ENCODE measurements at regions of chr16 and their contacts with region 1.

Region 1: DNA sequence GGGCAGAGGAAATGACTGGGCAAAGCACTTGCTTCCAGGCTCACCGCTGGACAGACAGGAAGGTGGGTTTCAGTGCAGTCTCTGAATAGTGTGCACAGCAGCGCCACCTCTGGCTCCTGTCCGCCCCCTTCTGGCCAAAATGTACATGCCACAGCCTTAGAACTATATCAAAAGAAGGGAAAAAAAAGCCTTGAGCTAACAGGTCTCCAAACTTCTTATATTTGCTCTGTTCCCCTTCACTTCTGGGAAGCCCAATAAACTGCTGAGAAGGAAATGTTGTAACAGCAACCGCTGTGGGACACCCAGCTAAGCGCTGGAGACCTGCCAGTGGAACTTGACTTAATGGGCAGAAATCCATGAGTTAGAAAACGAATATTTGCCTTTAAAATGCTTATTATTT is 17.5 kb downstream of the COG7 start:
- DNase-seq: peak; percentile 15
- ATAC-seq: peak; percentile 100
- H3K4me3 ChIP-seq: no peak overlapping the region
- H3K27ac ChIP-seq: no peak overlapping the region
- H3K4me1 ChIP-seq: no peaks in the 10 kb centered on the region
- H3K27me3 ChIP-seq: no peaks in the 10 kb centered on the region
- CTCF ChIP-seq: peak; percentile 89 to 93 (median 91)
- EP300 ChIP-seq: no peak
- POLR2A ChIP-seq: no peak
- RAD21 ChIP-seq: peak; percentile 72

Region 2: DNA sequence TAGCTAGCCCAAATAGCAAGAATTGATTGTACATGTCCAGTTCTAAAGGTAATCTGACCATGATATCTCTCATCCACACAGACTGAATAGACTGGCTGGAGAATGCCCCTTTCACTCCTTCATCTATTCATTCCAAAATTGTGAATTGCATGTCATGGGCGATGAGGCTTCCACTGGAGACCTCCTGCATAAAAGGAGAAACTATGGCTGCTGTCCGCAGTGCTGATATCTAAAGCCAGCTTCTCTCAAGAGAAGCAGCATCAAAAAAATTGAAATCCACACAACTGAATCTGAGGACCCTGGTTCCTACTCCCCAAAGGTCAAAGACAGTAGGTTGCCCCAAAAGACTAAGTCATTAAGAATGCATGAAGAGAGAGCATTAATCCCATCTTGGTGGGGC is 260.9 kb before region 1 on chr16:
- CTCF ChIA-PET with region 1: interaction called, 470 read pairs
- POLR2A ChIA-PET with region 1: no interaction called
- RAD21 ChIA-PET with region 1: interaction called, 159 read pairs
- SMC1A ChIA-PET with region 1: interaction called, 189 read pairs
- in situ Hi-C with region 1: loop called (anchors 5 kb)
- intact Hi-C with region 1: no loop called
- DNase-seq: no peak
- ATAC-seq: no peak
- H3K4me3 ChIP-seq: no peak overlapping the region
- H3K27ac ChIP-seq: no peak overlapping the region
- H3K4me1 ChIP-seq: no peaks in the 10 kb centered on the region
- H3K27me3 ChIP-seq: no peaks in the 10 kb centered on the region; a peak in 1 of 4 replicates
- CTCF ChIP-seq: no peak
- EP300 ChIP-seq: no peak
- POLR2A ChIP-seq: no peak
- RAD21 ChIP-seq: no peak

Region 3: GRCh38 chr16:23202166-23202565 is 233.3 kb before region 1 on chr16:
- CTCF ChIA-PET with region 1: interaction called, 10 read pairs
- POLR2A ChIA-PET with region 1: no interaction called
- RAD21 ChIA-PET with region 1: interaction called, 11 read pairs
- SMC1A ChIA-PET with region 1: interaction called, 3 read pairs
- in situ Hi-C with region 1: no loop called
- intact Hi-C with region 1: no loop called
- DNase-seq: no peak
- ATAC-seq: no peak
- H3K4me3 ChIP-seq: no peak overlapping the region
- H3K27ac ChIP-seq: no peak overlapping the region
- H3K4me1 ChIP-seq: no peaks in the 10 kb centered on the region
- H3K27me3 ChIP-seq: no peaks in the 10 kb centered on the region
- CTCF ChIP-seq: no peak
- EP300 ChIP-seq: no peak
- POLR2A ChIP-seq: no peak
- RAD21 ChIP-seq: no peak

Region 4: GRCh38 chr16:23324730-23325129 is 110.8 kb before region 1 on chr16:
- CTCF ChIA-PET with region 1: interaction called, 15 read pairs
- POLR2A ChIA-PET with region 1: interaction called, 3 read pairs
- RAD21 ChIA-PET with region 1: no interaction called
- SMC1A ChIA-PET with region 1: interaction called, 33 read pairs
- in situ Hi-C with region 1: no loop called
- intact Hi-C with region 1: no loop called
- DNase-seq: no peak
- ATAC-seq: no peak; the same call in 2 of the 3 replicates
- H3K4me3 ChIP-seq: no peak overlapping the region
- H3K27ac ChIP-seq: no peak overlapping the region
- H3K4me1 ChIP-seq: peaks cover 22% of the 10 kb centered on the region
- H3K27me3 ChIP-seq: no peaks in the 10 kb centered on the region
- CTCF ChIP-seq: no peak
- EP300 ChIP-seq: no peak
- POLR2A ChIP-seq: no peak
- RAD21 ChIP-seq: no peak

Region 5: GRCh38 chr16:23423496-23424049 is 11.9 kb before region 1 on chr16:
- CTCF ChIA-PET with region 1: interaction called, 16 read pairs
- POLR2A ChIA-PET with region 1: no interaction called
- RAD21 ChIA-PET with region 1: interaction called, 6 read pairs
- SMC1A ChIA-PET with region 1: interaction called, 31 read pairs
- in situ Hi-C with region 1: no loop called
- intact Hi-C with region 1: no loop called
- DNase-seq: no peak
- ATAC-seq: no peak
- H3K4me3 ChIP-seq: no peak overlapping the region
- H3K27ac ChIP-seq: no peak overlapping the region
- H3K4me1 ChIP-seq: no peaks in the 10 kb centered on the region
- H3K27me3 ChIP-seq: no peaks in the 10 kb centered on the region
- CTCF ChIP-seq: no peak
- EP300 ChIP-seq: no peak
- POLR2A ChIP-seq: no peak
- RAD21 ChIP-seq: no peak

Region 6: GRCh38 chr16:23595951-23596720 is 160.6 kb after region 1 on chr16 and contains the start of gene NDUFAB1:
- CTCF ChIA-PET with region 1: interaction called, 12 read pairs
- POLR2A ChIA-PET with region 1: no interaction called
- RAD21 ChIA-PET with region 1: interaction called, 6 read pairs
- SMC1A ChIA-PET with region 1: interaction called, 4 read pairs
- in situ Hi-C with region 1: no loop called
- intact Hi-C with region 1: no loop called
- DNase-seq: peak; percentile 51
- ATAC-seq: peak; percentile 99
- H3K4me3 ChIP-seq: peak within 1 kb of the TSS; percentile 82
- H3K27ac ChIP-seq: peak within 1 kb of the TSS; percentile 77
- H3K4me1 ChIP-seq: peaks cover 16% of the 10 kb centered on the region
- H3K27me3 ChIP-seq: no peaks in the 10 kb centered on the region
- CTCF ChIP-seq: peak; percentile 93 to 99 (median 99)
- EP300 ChIP-seq: no peak
- POLR2A ChIP-seq: peak; percentile 89
- RAD21 ChIP-seq: no peak
- polyA plus RNA-seq, gene NDUFAB1: 99.8 to 226 TPM